Activated CD4-positive, alpha-beta T cell treated with anti-CD3 and anti-CD28 coated beads, Interleukin-2, amount 10 ng/mL, durations not matched to agents 24 days and 14 days (primary cell): ENCODE measurements at regions of chr3 and their contacts with region 1.

Region 1: DNA sequence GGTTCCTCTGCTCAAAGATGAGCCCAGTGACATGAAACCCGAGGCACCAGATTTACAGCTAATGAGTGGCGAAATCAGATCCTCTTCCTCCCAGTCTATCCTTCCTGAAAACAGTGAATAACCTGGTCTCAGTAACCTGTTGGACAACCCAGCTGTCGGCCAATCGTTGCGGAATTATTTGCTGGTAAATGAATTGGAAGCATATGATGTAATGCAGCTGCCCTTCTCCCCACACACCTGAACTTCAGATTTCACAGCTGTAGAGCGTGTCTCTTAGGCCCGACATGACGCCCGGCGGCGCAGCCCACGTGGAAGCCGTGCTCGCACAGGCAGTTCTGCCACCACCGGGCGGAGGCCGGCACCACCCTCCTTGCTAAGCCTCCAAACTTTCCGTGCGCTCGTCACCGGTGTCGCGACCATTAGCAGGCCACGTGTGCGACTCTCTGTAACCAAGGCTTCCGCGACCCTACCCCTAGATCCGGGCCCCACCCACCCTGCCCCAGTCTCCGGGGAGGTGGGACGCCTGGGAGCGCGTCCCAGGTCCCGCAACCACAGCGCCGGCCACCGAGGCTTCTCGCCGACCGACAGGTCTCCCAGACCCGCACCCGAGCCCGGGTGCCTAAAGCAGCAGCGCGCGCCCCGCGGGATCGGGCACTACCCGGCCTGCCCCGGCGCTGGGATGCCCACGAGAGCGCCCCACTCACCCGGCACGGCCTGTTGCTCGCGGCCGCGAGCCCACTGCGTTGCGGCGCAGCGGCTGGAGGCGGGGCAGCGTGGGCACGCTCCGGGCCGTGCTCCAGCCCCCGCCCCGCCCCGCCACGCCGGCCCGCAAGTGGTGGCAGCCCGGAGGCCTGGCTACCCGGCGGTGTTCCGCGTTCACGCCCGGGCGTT is at the start of gene RIOX2:
- DNase-seq: peak; percentile 94
- H3K4me3 Mint-ChIP-seq: peak within 1 kb of the TSS; percentile 94
- H3K27ac Mint-ChIP-seq: peak within 1 kb of the TSS; percentile 99
- H3K4me1 Mint-ChIP-seq: peaks cover 76% of the 10 kb centered on the region
- H3K27me3 Mint-ChIP-seq: no peaks in the 10 kb centered on the region
- total RNA-seq, gene RIOX2: 84.1 and 87.7 TPM in 2 replicates

Region 2: DNA sequence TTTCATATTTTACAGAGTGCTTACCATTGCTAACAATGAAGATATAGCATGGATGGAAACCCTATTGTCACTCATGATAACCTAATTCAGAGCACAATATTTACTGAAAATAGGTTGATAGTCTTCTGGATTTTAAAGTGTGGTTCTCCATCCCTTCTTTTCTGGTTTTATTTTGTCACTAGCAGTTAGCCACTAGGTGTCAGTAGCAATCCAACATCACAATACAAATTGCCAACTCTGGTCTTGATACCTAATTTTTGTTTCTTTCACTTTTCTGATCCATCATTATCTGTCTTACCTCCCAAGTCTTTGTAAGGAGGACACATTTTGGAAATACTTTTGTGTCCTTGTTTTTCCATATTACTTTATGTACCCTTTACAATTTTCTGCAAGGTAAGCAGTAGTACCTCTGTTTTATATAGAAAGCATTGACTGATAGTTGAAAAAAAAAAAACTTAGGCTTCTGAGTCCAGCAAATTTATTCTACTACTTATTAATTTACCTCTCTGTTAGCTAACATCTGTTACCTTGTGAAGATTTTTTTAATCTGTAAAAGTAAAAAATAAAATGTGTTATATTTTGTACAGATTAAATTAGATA is 178.4 kb before region 1 on chr3:
- intact Hi-C with region 1: loop called (anchors 5 kb)
- DNase-seq: peak; percentile 80
- H3K4me3 Mint-ChIP-seq: no peak overlapping the region
- H3K27ac Mint-ChIP-seq: no peak overlapping the region
- H3K4me1 Mint-ChIP-seq: no peaks in the 10 kb centered on the region
- H3K27me3 Mint-ChIP-seq: no peaks in the 10 kb centered on the region

Region 3: GRCh38 chr3:97871801-97872524 is 100.0 kb before region 1 on chr3:
- intact Hi-C with region 1: loop called (anchors 2 kb)
- DNase-seq: peak; percentile 81
- H3K4me3 Mint-ChIP-seq: peak overlapping the region; percentile 62
- H3K27ac Mint-ChIP-seq: peak overlapping the region; percentile 90
- H3K4me1 Mint-ChIP-seq: peaks cover 21% of the 10 kb centered on the region
- H3K27me3 Mint-ChIP-seq: no peaks in the 10 kb centered on the region

Region 4: GRCh38 chr3:97940034-97940433 is 31.9 kb before region 1 on chr3:
- intact Hi-C with region 1: no loop called
- DNase-seq: peak; percentile 57
- H3K4me3 Mint-ChIP-seq: no peak overlapping the region
- H3K27ac Mint-ChIP-seq: no peak overlapping the region
- H3K4me1 Mint-ChIP-seq: peaks cover 16% of the 10 kb centered on the region
- H3K27me3 Mint-ChIP-seq: no peaks in the 10 kb centered on the region

Region 5: GRCh38 chr3:98008855-98009254 is 36.9 kb after region 1 on chr3:
- intact Hi-C with region 1: loop called (anchors 5 kb)
- DNase-seq: no peak
- H3K4me3 Mint-ChIP-seq: peak overlapping the region; percentile 15
- H3K27ac Mint-ChIP-seq: no peak overlapping the region
- H3K4me1 Mint-ChIP-seq: peaks cover 43% of the 10 kb centered on the region
- H3K27me3 Mint-ChIP-seq: no peaks in the 10 kb centered on the region